ENCODE measurements at regions of chr17 and their contacts with region 1.

Region 1: DNA sequence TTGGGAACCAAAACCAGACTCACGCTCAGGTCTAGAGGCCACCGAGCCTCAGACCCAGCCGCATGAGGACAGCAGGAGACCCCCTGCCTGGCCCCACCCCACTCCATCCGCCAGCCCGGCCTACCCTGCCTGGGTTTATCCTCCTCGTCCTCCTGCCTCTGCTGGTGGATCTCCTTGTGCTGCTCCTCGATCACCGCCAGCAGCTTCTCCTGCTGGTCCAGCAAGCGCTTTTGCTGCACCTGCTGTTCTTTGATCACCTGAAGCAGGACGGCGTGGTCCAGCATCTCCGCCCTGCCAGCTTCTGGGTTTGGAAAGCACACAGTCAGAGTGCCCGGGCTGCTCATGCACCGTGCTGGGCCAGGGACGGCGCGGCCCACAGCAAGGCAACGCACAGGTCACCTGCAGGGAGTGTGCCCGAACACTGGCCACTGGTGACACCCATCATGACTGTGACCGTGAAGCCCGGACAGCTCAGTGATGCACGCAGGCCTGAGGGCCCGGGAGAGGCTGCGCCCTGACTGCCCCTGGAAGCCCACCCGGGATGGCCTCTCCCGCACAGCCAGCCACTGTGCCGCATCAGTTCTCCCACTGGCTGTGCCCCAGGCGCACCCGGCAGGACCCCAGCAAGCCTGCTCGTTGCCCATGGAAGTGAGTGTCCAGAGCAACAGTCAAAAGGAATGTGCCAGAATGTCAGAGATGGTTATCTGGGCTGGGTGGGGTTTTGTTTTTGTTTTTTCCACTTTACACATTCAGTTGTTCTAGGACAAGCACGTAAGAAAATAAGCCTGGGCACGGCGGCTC is 7.8 kb downstream of the NDUFAF8 start:
- DNase-seq: no peak
- H3K4me3 ChIP-seq: no peak overlapping the region
- H3K27me3 ChIP-seq: no peaks in the 10 kb centered on the region
- CTCF ChIP-seq: no peak

Region 2: GRCh38 chr17:81125573-81126081 is 121.3 kb before region 1 on chr17:
- CTCF ChIA-PET with region 1: no interaction called
- POLR2A ChIA-PET with region 1: no interaction called
- DNase-seq: no peak
- H3K4me3 ChIP-seq: no peak overlapping the region
- H3K27me3 ChIP-seq: peaks cover 2% of the 10 kb centered on the region; the same call in 1 of the 2 replicates
- CTCF ChIP-seq: no peak

Region 3: GRCh38 chr17:81512560-81513371 is 265.8 kb after region 1 on chr17 and contains the start of gene ACTG1:
- CTCF ChIA-PET with region 1: no interaction called
- POLR2A ChIA-PET with region 1: interaction called, 12 read pairs
- DNase-seq: peak; percentile 51
- H3K4me3 ChIP-seq: peak within 1 kb of the TSS; percentile 95
- H3K27me3 ChIP-seq: no peaks in the 10 kb centered on the region
- CTCF ChIP-seq: no peak
- polyA plus RNA-seq, gene ACTG1: 2,988 and 3,774 TPM in 2 replicates

Measured in BJ (cell line).